ENCODE measurements at regions of chr12 and their contacts with region 1.

Region 1: GRCh38 chr12:123436017-123436964 is at the start of gene RILPL2:
- DNase-seq: peak; percentile 64
- ATAC-seq: peak; percentile 98
- H3K4me3 ChIP-seq: peak within 1 kb of the TSS; percentile 93
- H3K27ac ChIP-seq: no peak within 1 kb of the TSS
- H3K4me1 ChIP-seq: peaks cover 6% of the 10 kb centered on the region; the same call in 1 of the 2 replicates
- H3K27me3 ChIP-seq: no peaks in the 10 kb centered on the region
- CTCF ChIP-seq: peak; percentile 9; the same call in 1 of the 2 replicates
- total RNA-seq, gene RILPL2: 2.2 and 3.2 TPM in 2 replicates

Region 2: DNA sequence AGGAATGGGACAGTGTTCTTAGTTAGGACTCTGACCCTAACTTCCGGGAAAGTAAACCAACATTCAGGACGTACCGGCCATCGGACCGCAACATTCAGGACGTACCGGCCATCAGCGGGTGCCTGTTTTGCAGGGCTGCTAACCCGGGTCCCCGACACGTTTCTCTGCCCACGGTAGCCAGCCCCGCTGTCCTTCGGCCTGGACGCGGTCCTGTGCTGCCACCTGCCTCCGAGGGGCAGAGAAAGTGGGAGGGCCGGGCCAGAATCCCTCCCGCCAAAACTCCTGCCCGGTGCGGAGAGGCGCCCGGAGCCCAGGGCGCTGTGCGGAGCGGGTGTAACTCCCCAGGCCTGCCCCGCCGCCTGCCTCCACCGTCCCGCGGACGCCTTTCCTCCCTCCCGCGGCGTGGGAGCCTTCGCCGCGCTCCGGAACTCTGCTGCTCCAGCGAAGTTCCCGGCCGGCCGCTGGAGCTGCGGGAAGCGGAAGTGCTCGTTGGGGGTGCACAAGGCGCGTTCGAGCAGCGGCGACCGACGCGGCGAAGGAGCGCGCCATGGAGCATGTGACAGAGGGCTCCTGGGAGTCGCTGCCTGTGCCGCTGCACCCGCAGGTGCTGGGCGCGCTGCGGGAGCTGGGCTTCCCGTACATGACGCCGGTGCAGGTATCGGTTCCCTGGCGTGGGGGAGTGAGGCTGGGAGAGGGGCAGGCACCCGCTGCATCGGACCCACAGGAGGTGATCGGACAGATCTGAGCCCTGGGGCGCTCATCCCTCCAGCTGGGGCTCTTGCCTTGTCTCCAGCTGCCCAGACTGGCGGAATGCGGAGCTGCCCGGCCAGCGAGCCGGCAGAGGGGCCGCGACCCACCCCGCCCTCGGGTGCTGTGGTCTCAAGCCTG is 165.6 kb after region 1 on chr12 and contains the start of gene DDX55:
- CTCF ChIA-PET with region 1: interaction called, 20 read pairs
- POLR2A ChIA-PET with region 1: no interaction called
- intact Hi-C with region 1: no loop called
- DNase-seq: peak; percentile 86
- ATAC-seq: peak; percentile 90
- H3K4me3 ChIP-seq: peak within 1 kb of the TSS; percentile 85
- H3K27ac ChIP-seq: peak within 1 kb of the TSS; percentile 42
- H3K4me1 ChIP-seq: peaks cover 6% of the 10 kb centered on the region; the same call in 1 of the 2 replicates
- H3K27me3 ChIP-seq: no peaks in the 10 kb centered on the region
- CTCF ChIP-seq: peak; percentile 54
- total RNA-seq, gene DDX55: 41.1 and 50.0 TPM in 2 replicates

Region 3: GRCh38 chr12:123690191-123690840 is 254.0 kb after region 1 on chr12:
- CTCF ChIA-PET with region 1: no interaction called
- POLR2A ChIA-PET with region 1: no interaction called
- intact Hi-C with region 1: no loop called
- DNase-seq: no peak
- ATAC-seq: no peak
- H3K4me3 ChIP-seq: no peak overlapping the region
- H3K27ac ChIP-seq: no peak overlapping the region
- H3K4me1 ChIP-seq: no peaks in the 10 kb centered on the region
- H3K27me3 ChIP-seq: no peaks in the 10 kb centered on the region
- CTCF ChIP-seq: no peak

Measured in PC-3 (cell line).